Activated CD4-positive, alpha-beta T cell treated with anti-CD3 and anti-CD28 coated beads for 36 hours (primary cell): ENCODE measurements at regions of chr17 and their contacts with region 1.

Region 1: DNA sequence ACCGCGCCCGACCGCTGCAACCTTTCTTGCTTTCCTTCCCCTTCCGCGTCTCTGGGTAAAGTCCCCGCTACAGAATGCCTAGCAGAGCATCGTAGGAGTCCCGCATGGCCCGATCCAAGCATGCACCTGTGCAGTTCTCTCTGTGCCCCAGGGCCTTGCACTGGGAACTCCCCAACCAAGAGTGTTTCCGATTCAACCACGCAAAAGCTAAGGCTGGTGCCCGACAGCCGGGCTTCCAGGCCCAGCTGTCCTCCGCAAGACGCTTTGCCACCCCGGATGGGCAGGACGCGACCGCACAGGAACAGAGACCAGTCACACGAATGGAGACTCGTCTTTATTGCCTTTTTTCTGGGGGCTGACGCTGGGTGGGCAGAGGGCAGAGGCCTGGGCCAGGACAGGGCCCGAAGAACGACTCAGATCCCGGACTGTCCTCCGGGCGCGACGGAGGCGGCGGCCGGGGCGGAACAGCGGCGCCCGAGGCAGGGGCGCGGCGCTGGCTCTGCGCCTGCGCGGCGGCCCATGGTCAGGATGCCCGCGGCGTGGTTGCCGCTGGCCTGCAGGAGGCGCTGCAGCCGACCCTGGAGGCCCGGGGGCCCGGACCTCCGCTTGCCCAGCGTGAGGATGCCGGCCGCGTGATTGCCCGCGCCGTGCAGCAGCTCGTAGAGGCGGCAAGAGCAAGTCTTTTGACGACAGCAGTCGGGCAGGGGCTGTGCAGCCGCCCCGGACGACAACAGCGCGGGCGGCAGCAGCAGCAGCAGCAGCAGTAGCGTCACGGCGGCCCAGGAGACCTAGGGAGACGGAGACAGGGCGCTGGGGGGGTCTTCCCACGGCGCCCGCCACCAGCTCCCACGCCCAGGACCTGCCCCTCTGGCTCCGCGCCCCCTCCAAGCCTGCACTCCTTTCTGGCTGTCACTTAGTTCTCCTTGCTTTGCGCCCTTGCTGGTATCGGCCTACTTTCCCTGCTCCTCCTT is 1.2 kb downstream of the HCRT start:
- DNase-seq: peak; percentile 89
- ATAC-seq: peak; percentile 70
- H3K4me3 Mint-ChIP-seq: peak overlapping the region; percentile 91
- H3K27ac Mint-ChIP-seq: peak overlapping the region; percentile 88
- H3K4me1 Mint-ChIP-seq: peaks cover 46% of the 10 kb centered on the region
- H3K27me3 Mint-ChIP-seq: peaks cover 7% of the 10 kb centered on the region

Region 2: DNA sequence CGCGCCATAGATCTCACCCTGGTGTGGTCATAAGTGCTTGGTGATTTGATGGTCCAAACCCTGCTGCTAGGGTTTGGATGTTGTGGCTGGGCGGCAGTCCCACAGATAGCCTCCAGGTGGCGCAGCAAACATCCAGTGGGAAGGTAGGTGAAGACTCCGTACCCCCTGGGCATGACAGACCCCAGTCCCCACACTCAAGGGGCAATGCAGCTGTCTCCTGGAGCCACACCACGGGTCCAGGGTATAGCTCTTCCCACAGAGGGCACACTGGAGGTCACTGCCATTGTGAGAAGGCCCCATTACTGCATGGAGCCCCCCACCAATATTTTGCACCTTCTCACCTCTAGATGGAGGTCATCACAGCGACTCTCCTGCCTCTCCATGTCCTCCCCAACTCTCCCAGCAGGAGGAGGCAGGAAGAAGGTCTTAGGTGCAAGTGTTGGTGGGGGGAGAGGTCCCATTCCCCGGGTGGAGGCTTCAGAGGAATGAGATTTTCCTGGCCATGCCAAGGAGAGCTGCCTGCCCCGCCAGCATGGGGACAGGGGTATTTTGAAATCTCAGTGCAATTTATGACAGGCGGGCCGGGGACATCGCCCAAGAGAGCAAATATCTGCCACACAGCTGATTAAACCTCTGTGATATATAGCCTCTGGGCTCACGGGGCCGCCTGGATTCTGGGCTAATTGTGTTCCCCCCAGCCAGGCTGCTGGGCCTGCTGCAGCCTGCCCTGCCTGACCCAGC is 116.5 kb before region 1 on chr17:
- CTCF ChIA-PET with region 1: interaction called, 6 read pairs
- POLR2A ChIA-PET with region 1: no interaction called
- intact Hi-C with region 1: loop called in 1 of 2 experiments (anchors 1 kb)
- DNase-seq: peak; percentile 85
- ATAC-seq: peak; percentile 62
- H3K4me3 Mint-ChIP-seq: no peak overlapping the region
- H3K27ac Mint-ChIP-seq: no peak overlapping the region
- H3K4me1 Mint-ChIP-seq: peaks cover 21% of the 10 kb centered on the region
- H3K27me3 Mint-ChIP-seq: peaks cover 9% of the 10 kb centered on the region

Region 3: DNA sequence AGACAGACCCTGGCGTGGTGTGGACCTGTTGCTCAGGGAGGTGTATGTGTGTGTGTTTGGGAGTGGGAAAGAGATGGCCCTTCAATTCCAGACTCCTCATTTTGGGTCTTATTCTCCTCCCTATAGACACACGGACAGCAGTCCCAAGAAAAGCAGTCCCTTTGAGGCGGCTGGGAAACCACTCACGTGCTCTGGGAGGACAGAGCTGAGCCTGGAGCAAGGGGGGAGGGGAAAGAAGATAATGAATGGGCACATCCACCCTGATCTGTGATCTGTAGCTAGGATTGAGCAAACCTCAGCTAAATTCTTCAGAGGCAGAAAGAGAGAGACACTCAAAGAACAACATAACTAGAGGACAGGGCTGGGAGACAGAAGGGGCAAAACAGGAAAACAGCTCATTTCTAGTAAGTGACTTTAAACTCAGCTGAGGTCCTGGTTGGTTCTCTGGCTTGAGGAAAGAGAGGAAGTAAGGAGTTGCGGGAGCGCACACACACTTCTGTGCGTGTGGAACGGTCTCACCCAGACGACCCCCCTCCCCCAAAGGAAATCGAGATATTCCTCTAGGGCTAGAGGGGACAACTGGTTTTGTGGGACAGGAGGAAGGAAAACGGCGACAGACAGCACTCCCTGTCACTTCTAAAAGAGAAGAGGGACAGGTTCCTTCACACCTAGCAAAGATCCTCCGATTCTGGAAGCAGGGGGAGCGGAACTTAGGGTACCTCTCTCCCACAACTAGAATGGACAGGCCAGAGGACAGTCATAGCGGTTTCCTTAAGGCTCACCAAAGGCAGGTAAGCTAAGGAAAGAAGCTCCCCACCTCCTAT is 29.9 kb before region 1 on chr17:
- CTCF ChIA-PET with region 1: interaction called, 5 read pairs
- POLR2A ChIA-PET with region 1: interaction called, 3 read pairs
- intact Hi-C with region 1: loop called in 1 of 2 experiments (anchors 1 kb)
- DNase-seq: no peak
- ATAC-seq: no peak
- H3K4me3 Mint-ChIP-seq: peak overlapping the region; percentile 97
- H3K27ac Mint-ChIP-seq: peak overlapping the region; percentile 93
- H3K4me1 Mint-ChIP-seq: peaks cover 31% of the 10 kb centered on the region
- H3K27me3 Mint-ChIP-seq: no peaks in the 10 kb centered on the region

Region 4: GRCh38 chr17:42287926-42288802 is 104.1 kb after region 1 on chr17 and contains the start of gene STAT5A:
- CTCF ChIA-PET with region 1: interaction called, 4 read pairs
- POLR2A ChIA-PET with region 1: interaction called, 3 read pairs
- intact Hi-C with region 1: loop called in 1 of 2 experiments (anchors 1 kb)
- DNase-seq: peak; percentile 90
- ATAC-seq: peak; percentile 65
- H3K4me3 Mint-ChIP-seq: peak within 1 kb of the TSS; percentile 81
- H3K27ac Mint-ChIP-seq: peak within 1 kb of the TSS; percentile 96
- H3K4me1 Mint-ChIP-seq: peaks cover 63% of the 10 kb centered on the region
- H3K27me3 Mint-ChIP-seq: no peaks in the 10 kb centered on the region
- total RNA-seq, gene STAT5A: 178 to 203 TPM

Region 5: GRCh38 chr17:42459256-42459800 is 275.3 kb after region 1 on chr17:
- CTCF ChIA-PET with region 1: interaction called, 4 read pairs
- POLR2A ChIA-PET with region 1: no interaction called
- intact Hi-C with region 1: loop called in 1 of 2 experiments (anchors 1 kb)
- DNase-seq: peak; percentile 68
- ATAC-seq: no peak
- H3K4me3 Mint-ChIP-seq: peak overlapping the region; percentile 86
- H3K27ac Mint-ChIP-seq: peak overlapping the region; percentile 91
- H3K4me1 Mint-ChIP-seq: peaks cover 46% of the 10 kb centered on the region
- H3K27me3 Mint-ChIP-seq: no peaks in the 10 kb centered on the region

Region 6: DNA sequence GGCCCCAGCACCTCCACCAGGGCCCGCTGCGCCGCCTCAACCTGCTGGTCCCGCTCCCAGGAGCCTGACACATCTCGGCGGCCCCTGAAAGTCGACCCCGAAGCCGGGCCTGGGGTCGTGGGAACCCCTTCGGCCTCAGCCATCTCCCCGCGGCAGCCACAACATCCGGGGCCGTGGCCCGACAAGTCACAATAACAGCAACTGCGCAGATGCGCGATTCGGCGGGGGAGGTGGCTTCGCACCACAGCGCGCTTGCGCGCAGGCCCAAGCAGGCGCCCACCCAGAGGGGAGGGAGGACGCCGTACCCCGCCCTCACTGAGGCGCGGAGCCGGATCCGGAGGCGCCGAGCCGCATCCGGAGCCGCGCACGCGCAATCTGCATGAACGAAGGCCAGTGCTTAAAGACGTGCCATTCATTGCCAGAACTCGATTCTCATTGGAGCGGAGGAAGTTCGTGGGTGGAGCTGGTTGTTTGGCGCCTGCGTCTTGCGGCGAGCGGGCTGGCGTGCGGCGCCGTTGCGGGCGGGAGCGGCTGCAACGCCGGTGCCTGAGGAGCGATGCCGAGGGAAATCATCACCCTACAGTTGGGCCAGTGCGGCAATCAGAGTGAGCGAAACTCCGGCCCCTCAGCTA is 425.3 kb after region 1 on chr17 and contains the starts of genes RETREG3 and TUBG1:
- CTCF ChIA-PET with region 1: no interaction called
- POLR2A ChIA-PET with region 1: no interaction called
- intact Hi-C with region 1: no loop called
- DNase-seq: peak; percentile 100
- ATAC-seq: peak; percentile 92
- H3K4me3 Mint-ChIP-seq: peak within 1 kb of the TSS; percentile 95
- H3K27ac Mint-ChIP-seq: peak within 1 kb of the TSS; percentile 97
- H3K4me1 Mint-ChIP-seq: peaks cover 35% of the 10 kb centered on the region
- H3K27me3 Mint-ChIP-seq: no peaks in the 10 kb centered on the region
- total RNA-seq, gene RETREG3: 28.3 to 30.9 TPM
- total RNA-seq, gene TUBG1: 76.1 to 102 TPM

Region 7: GRCh38 chr17:42744806-42745617 is 561.0 kb after region 1 on chr17 and contains the start of gene EZH1:
- CTCF ChIA-PET with region 1: no interaction called
- POLR2A ChIA-PET with region 1: no interaction called
- intact Hi-C with region 1: loop called in 1 of 2 experiments (anchors 2 kb)
- DNase-seq: peak; percentile 96
- ATAC-seq: peak; percentile 91
- H3K4me3 Mint-ChIP-seq: peak within 1 kb of the TSS; percentile 89
- H3K27ac Mint-ChIP-seq: peak within 1 kb of the TSS; percentile 98
- H3K4me1 Mint-ChIP-seq: peaks cover 19% of the 10 kb centered on the region
- H3K27me3 Mint-ChIP-seq: peaks cover 7% of the 10 kb centered on the region
- total RNA-seq, gene EZH1: 28.6 to 29.5 TPM